T-cell (primary cell): ENCODE measurements at regions of chr3 and their contacts with region 1.

Region 1: GRCh38 chr3:46517016-46517793 is 19.4 kb downstream of the RTP3 start:
- DNase-seq: no peak
- ATAC-seq: peak in 1 of 4 experiments; percentile 55
- H3K4me3 ChIP-seq: no peak overlapping the region
- H3K4me3 Mint-ChIP-seq: no peak overlapping the region
- H3K27ac ChIP-seq: no peak overlapping the region
- H3K27ac Mint-ChIP-seq: peak overlapping the region in 1 of 2 donors; percentile 19
- H3K4me1 ChIP-seq: no peaks in the 10 kb centered on the region
- H3K4me1 Mint-ChIP-seq: peaks cover 0 to 4% (median 2%) of the 10 kb centered on the region in 3 donors
- H3K27me3 ChIP-seq: no peaks in the 10 kb centered on the region
- H3K27me3 Mint-ChIP-seq: peaks cover 0 to 5% of the 10 kb centered on the region in 2 donors

Region 2: DNA sequence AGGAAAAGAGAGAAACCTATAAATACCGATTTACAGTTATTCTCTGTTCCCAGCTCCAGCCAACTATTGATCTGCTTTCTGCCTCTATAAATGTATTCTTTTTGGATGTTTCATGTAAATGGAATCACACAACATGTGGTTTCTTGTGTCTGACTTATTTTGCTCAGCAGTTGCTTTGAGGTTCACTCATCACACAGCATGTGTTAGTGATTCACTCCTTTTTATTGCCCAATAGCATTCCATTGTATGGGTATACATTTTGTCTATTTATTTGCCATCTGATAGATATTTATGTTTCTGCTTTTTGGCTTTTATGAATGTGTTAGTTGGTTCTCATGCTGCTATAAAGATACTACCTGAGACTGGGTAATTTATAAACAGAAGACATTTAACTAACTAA is 332.7 kb before region 1 on chr3:
- CTCF ChIA-PET with region 1: no interaction called
- POLR2A ChIA-PET with region 1: interaction called in 1 of 2 experiments, 11 read pairs
- DNase-seq: no peak
- ATAC-seq: no peak
- H3K4me3 ChIP-seq: no peak overlapping the region
- H3K4me3 Mint-ChIP-seq: no peak overlapping the region
- H3K27ac ChIP-seq: no peak overlapping the region
- H3K27ac Mint-ChIP-seq: no peak overlapping the region
- H3K4me1 ChIP-seq: peaks cover 0 to 5% of the 10 kb centered on the region in 2 experiments
- H3K4me1 Mint-ChIP-seq: peaks cover 0 to 17% (median 6%) of the 10 kb centered on the region in 3 donors
- H3K27me3 ChIP-seq: peaks cover 0 to 9% of the 10 kb centered on the region in 2 experiments
- H3K27me3 Mint-ChIP-seq: peaks cover 0 to 4% of the 10 kb centered on the region in 2 donors

Region 3: GRCh38 chr3:46422617-46423016 is 94.6 kb before region 1 on chr3:
- CTCF ChIA-PET with region 1: no interaction called
- POLR2A ChIA-PET with region 1: no interaction called
- DNase-seq: no peak
- ATAC-seq: no peak
- H3K4me3 ChIP-seq: no peak overlapping the region
- H3K4me3 Mint-ChIP-seq: no peak overlapping the region
- H3K27ac ChIP-seq: no peak overlapping the region
- H3K27ac Mint-ChIP-seq: no peak overlapping the region
- H3K4me1 ChIP-seq: peaks cover 0 to 5% of the 10 kb centered on the region in 2 experiments
- H3K4me1 Mint-ChIP-seq: peaks cover 10 to 13% (median 12%) of the 10 kb centered on the region in 3 donors
- H3K27me3 ChIP-seq: no peaks in the 10 kb centered on the region
- H3K27me3 Mint-ChIP-seq: no peaks in the 10 kb centered on the region

Region 4: GRCh38 chr3:46558184-46559043 is 41.2 kb after region 1 on chr3:
- CTCF ChIA-PET with region 1: no interaction called
- POLR2A ChIA-PET with region 1: no interaction called
- DNase-seq: peak; percentile 43 to 87 (median 63)
- ATAC-seq: peak; percentile 98 to 99 (median 98)
- H3K4me3 ChIP-seq: peak overlapping the region; percentile 46 to 80
- H3K4me3 Mint-ChIP-seq: peak overlapping the region; percentile 63 to 78 (median 76)
- H3K27ac ChIP-seq: no peak overlapping the region
- H3K27ac Mint-ChIP-seq: peak overlapping the region; percentile 66 to 74
- H3K4me1 ChIP-seq: peaks cover 6 to 12% of the 10 kb centered on the region in 2 experiments
- H3K4me1 Mint-ChIP-seq: peaks cover 11 to 24% (median 24%) of the 10 kb centered on the region in 3 donors
- H3K27me3 ChIP-seq: peaks cover 0 to 9% of the 10 kb centered on the region in 2 experiments
- H3K27me3 Mint-ChIP-seq: no peaks in the 10 kb centered on the region